Caco-2 (cell line): ENCODE measurements at regions of chr5 and their contacts with region 1.

Region 1: DNA sequence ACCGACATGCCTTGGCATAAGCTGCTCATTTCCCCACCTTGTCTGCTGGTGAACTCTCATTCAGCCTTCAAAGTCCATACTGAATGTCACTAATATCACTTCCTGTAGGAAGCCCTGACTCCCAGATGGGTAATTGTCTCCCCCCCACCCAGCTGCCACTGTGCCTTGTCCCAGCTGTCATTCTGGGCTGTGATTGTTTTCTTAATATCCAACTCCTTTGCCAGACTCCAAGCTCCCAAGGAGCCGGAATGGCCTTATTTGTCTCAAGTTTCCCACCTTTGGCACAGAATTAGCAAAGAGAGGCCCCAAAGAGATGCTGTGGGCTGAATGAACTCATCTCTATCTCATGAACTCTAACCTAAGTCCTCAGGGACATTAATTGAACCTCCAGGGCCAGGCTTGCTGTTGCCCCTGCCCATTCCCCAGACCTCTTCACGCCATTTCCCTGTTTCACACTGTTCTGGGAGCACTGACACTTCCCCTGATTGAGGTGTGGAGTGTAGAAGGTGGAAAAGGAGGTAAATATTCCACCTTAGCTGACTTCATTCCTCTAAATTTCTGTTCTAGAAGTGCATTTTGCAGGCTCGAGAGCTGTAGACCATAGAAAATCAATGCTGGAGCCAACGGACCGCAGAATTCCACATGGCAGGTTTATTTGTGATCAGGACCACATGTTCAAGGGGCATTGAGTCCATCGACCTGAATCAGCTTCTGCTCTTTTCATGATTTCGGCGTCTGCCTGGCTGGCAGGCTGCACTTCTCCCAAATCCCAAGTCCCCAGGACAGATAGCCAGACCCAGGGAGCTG is 4.9 kb upstream of the SH3PXD2B start:
- DNase-seq: no peak
- H3K4me3 ChIP-seq: no peak overlapping the region
- H3K4me3 Mint-ChIP-seq: no peak overlapping the region
- H3K27ac Mint-ChIP-seq: no peak overlapping the region
- H3K4me1 ChIP-seq: 0 out of 2 replicates have a peak, but pooled peaks cover 4% of the 10 kb centered on the region
- H3K4me1 Mint-ChIP-seq: peaks cover 6% of the 10 kb centered on the region
- H3K27me3 ChIP-seq: no peaks in the 10 kb centered on the region
- H3K27me3 Mint-ChIP-seq: no peaks in the 10 kb centered on the region
- CTCF ChIP-seq: no peak

Region 2: DNA sequence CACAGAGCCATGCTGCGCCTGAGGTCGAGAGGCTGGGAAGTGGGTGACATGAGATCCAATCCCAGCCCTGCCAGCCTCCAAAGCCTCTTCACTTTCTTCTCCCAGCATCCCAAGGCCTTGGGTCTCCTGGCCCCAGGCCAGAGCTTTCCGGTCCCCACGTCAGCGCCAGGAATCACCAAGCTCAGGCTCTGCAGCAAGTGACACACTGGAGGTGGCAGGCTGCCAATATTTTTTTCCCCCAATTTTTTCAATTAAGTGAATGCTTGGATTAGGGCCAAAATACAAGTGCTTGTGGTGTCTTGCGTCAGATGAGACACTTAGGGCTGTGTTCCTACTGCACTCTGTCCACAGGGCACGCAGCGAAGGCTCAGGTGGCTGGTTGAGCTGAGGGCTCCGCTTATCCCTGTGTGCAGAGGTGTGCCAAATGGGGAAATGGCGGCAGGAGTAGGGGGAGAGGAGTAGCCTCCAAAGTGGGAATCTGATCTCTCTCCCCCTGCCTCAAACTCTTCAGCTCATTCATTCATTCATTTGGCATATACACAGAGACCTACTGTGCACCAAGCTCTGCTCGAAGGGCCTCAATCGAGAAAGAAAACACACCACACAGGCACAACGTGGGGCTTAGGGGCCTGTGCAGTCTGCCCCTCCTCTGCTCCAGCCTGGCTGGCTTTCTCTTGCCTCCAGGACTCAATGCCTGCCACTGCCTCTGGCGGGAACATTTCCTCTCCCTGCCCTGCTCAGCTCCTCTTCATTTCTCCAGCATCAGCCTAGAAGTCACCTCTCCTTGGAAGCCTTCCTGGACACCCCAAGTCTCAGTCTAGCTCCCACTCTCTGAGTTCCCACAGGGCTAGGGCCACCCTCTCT is 21.5 kb before region 1 on chr5:
- CTCF ChIA-PET with region 1: interaction called, 11 read pairs
- POLR2A ChIA-PET with region 1: no interaction called
- intact Hi-C with region 1: no loop called
- DNase-seq: no peak
- H3K4me3 ChIP-seq: no peak overlapping the region
- H3K4me3 Mint-ChIP-seq: no peak overlapping the region
- H3K27ac Mint-ChIP-seq: no peak overlapping the region
- H3K4me1 ChIP-seq: 0 out of 2 replicates have a peak, but pooled peaks cover 7% of the 10 kb centered on the region
- H3K4me1 Mint-ChIP-seq: no peaks in the 10 kb centered on the region
- H3K27me3 ChIP-seq: no peaks in the 10 kb centered on the region
- H3K27me3 Mint-ChIP-seq: no peaks in the 10 kb centered on the region
- CTCF ChIP-seq: no peak